Lower leg skin (tissue), 4 donors: ENCODE measurements at regions of chr1 and their contacts with region 1.

Region 1: DNA sequence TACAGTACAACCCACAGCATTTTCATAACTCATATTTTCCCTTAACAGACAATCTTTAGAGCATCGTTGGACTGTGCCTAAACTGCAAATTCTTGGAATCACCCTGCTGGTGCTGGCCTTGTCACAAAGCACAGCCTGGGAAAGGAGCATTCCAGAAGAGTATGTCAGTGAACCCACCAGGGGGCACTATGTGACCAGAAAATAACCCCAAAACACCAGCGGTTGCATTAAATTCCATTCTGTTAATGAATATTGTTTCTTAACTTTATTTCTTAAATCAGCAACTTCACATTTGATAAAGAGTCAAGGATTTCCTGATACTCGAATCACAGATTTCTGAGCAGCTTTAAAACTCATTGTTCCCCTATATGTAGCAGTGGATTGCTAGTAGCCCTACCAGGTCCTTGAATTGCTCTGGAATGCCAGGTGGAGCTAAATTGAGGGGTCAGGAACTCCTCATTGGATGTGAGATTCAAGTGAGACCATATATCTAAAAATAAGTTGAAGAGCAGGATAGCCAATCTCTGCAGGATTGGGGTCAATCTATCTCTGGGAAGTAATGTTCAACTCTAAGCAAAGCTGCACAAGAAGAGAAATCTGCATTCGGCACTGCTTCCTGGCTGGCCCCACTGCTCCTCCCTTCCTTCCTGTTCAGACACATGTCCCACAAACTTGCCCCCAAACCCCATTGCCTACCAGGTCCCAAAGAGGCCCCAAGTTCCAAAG is 12.7 kb upstream of the RAB4A start:
- DNase-seq: no peak
- H3K4me3 ChIP-seq: no peak overlapping the region
- CTCF ChIP-seq: peak in 1 of 3 donors; percentile 59
- POLR2A ChIP-seq: no peak

Region 2: GRCh38 chr1:229479660-229480399 is 221.6 kb after region 1 on chr1:
- intact Hi-C with region 1: loop called (anchors 10 kb)
- DNase-seq: no peak
- H3K4me3 ChIP-seq: no peak overlapping the region
- CTCF ChIP-seq: no peak
- POLR2A ChIP-seq: no peak

Region 3: DNA sequence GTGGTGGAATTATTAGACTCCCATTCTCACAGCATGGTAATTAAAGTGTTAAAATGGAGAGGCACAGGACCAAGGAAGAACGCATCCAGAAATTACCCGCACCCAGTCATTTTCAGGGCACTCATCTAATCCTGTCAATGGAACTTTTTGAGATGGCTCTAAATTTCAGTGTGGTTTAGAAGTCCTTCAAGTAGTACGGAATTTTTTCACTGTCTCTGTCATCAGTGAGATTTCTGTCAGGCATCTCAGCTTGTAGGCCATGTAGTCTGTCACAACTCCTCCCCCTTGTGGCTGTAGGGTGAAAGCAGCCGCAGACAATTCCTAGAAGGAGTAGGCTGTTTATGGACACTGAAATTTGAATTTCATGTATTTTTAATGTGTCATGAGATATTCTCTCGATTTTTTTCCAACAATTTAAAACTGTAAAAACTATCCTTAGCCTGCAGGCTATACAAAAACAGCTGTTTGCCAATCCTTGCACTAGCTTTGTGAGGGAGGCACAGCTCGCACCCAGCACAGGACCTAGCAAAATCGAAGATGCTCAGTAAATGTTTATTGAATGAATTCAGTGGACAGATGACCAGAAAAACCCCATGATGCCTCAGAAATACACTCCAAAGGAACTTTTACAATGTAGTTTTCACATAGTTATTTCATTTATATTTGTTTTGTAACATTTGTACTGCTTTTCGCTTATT is 256.5 kb after region 1 on chr1:
- intact Hi-C with region 1: loop called (anchors 10 kb)
- DNase-seq: peak; percentile 66 to 89
- H3K4me3 ChIP-seq: no peak overlapping the region
- CTCF ChIP-seq: no peak
- POLR2A ChIP-seq: no peak

Region 4: GRCh38 chr1:230054092-230054749 is 796.0 kb after region 1 on chr1:
- intact Hi-C with region 1: no loop called
- DNase-seq: no peak
- H3K4me3 ChIP-seq: no peak overlapping the region
- CTCF ChIP-seq: no peak
- POLR2A ChIP-seq: no peak